Pancreas (tissue), 10 donors: ENCODE measurements at regions of chr7 and their contacts with region 1.

Region 1: GRCh38 chr7:56003749-56004148 is 39.4 kb downstream of the NIPSNAP2 start:
- DNase-seq: no peak
- ATAC-seq: no peak
- H3K4me3 ChIP-seq: no peak overlapping the region
- H3K27ac ChIP-seq: no peak overlapping the region
- H3K4me1 ChIP-seq: no peaks in the 10 kb centered on the region
- H3K27me3 ChIP-seq: no peaks in the 10 kb centered on the region
- CTCF ChIP-seq: no peak

Region 2: GRCh38 chr7:56074371-56074791 is 70.6 kb after region 1 on chr7:
- intact Hi-C with region 1: loop called in 2 of 3 experiments (anchors 2 to 10 kb)
- DNase-seq: peak; percentile 90 to 97 (median 94)
- ATAC-seq: peak; percentile 97 to 99 (median 98)
- H3K4me3 ChIP-seq: no peak overlapping the region
- H3K27ac ChIP-seq: peak overlapping the region in 3 of 4 donors; percentile 33 to 67 (median 50)
- H3K4me1 ChIP-seq: peaks cover 3 to 5% (median 4%) of the 10 kb centered on the region in 3 donors
- H3K27me3 ChIP-seq: no peaks in the 10 kb centered on the region
- CTCF ChIP-seq: peak; percentile 83 to 96 (median 90)